ENCODE measurements at regions of chr12 and their contacts with region 1.

Region 1: GRCh38 chr12:22250762-22251161 is 83.7 kb downstream of the ST8SIA1 start:
- DNase-seq: no peak

Region 2: GRCh38 chr12:22287776-22288621 is 37.2 kb after region 1 on chr12:
- intact Hi-C with region 1: loop called (anchors 5 kb)
- DNase-seq: no peak